Panc1 (cell line): ENCODE measurements at regions of chr11 and their contacts with region 1.

Region 1: DNA sequence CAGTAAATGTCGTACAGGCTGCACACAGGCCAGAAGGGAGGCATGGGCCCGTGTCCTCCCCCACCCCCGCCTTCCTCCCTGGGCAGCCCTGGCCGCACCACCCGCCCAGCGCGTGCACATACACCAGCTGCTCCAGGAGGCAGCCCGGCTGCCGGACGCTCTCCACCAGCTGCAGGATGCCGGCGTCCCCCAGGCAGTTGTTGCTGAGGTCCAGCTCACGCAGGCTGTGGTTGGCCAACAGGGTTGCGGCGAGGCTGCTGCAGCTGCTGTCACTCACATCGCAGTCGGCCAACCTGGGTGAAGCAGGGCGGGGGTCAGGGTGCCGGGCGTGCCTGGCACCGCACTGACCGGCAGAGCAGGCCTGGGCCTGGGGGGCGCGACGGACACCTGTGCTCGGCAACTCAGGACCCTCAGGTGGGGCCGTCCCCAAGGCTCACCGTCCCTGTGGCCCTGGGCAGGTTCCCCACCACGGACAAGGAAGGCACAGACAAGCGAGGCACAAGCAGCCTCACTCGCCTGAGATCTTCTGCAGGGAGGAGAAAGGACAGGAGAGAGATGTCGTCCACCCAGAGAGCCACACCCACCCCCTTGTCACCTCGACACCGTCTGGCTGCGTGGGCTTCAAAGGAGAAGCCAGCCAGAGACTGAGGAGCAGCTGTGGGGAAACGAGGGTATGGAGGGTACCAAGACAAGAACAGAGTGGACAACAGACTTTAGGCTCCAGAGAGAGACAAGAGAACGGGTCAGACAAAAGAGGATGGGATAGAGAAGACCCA is 12.1 kb downstream of the RNH1 start:
- DNase-seq: no peak
- ATAC-seq: peak; percentile 17
- H3K4me3 ChIP-seq: no peak overlapping the region
- H3K27ac ChIP-seq: no peak overlapping the region
- H3K4me1 ChIP-seq: no peaks in the 10 kb centered on the region
- H3K27me3 ChIP-seq: no peaks in the 10 kb centered on the region
- CTCF ChIP-seq: no peak

Region 2: GRCh38 chr11:236774-237767 is 257.9 kb before region 1 on chr11 and contains the start of gene PSMD13:
- CTCF ChIA-PET with region 1: no interaction called
- POLR2A ChIA-PET with region 1: no interaction called
- in situ Hi-C with region 1: no loop called
- intact Hi-C with region 1: no loop called
- DNase-seq: no peak
- ATAC-seq: peak; percentile 96
- H3K4me3 ChIP-seq: peak within 1 kb of the TSS; percentile 87 to 98
- H3K27ac ChIP-seq: peak within 1 kb of the TSS; percentile 97
- H3K4me1 ChIP-seq: peaks cover 26% of the 10 kb centered on the region
- H3K27me3 ChIP-seq: no peaks in the 10 kb centered on the region
- CTCF ChIP-seq: no peak
- total RNA-seq, gene PSMD13: 271 TPM

Region 3: DNA sequence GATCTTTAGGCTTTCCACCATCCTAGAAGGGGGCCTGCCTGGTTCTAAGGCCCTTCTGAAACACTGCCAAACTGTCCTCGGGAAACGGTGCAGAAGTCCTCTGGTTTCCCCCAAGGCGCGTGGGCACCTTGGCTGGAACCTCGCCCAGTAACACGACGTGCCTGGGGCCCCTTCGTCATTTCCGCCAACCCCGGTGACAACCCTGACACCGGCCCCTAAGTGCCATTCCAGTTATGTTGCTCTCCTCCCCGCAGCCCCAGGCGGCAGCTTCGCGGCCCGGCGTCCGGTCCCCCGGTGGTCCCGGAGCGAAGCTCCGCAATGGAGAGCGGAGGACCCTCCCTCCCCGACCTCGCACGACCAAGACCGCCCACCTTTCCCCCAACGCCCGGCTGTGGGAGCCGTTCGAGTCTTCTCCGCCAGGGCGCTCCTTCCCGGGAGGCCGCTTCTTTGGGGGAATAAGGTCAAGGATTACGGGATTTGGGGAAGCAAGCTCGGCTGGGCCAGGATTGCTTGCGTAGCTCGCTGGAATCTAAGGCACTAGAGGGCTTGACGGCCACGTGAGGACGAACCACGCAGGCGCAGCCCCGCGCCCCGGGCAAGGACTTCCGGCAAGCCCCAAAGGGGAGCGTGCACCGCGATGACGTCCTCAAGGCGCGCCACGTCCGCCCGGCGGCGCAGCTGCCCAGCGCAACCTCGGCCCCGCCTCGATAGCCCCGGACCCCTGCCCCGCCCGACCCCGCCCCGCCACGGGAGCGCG is 11.5 kb after region 1 on chr11:
- CTCF ChIA-PET with region 1: interaction called, 4 read pairs
- POLR2A ChIA-PET with region 1: interaction called, 11 read pairs
- in situ Hi-C with region 1: no loop called
- intact Hi-C with region 1: no loop called
- DNase-seq: peak; percentile 91
- ATAC-seq: peak; percentile 88
- H3K4me3 ChIP-seq: peak overlapping the region; percentile 83 to 94
- H3K27ac ChIP-seq: peak overlapping the region; percentile 99
- H3K4me1 ChIP-seq: peaks cover 24% of the 10 kb centered on the region
- H3K27me3 ChIP-seq: no peaks in the 10 kb centered on the region
- CTCF ChIP-seq: no peak

Region 4: DNA sequence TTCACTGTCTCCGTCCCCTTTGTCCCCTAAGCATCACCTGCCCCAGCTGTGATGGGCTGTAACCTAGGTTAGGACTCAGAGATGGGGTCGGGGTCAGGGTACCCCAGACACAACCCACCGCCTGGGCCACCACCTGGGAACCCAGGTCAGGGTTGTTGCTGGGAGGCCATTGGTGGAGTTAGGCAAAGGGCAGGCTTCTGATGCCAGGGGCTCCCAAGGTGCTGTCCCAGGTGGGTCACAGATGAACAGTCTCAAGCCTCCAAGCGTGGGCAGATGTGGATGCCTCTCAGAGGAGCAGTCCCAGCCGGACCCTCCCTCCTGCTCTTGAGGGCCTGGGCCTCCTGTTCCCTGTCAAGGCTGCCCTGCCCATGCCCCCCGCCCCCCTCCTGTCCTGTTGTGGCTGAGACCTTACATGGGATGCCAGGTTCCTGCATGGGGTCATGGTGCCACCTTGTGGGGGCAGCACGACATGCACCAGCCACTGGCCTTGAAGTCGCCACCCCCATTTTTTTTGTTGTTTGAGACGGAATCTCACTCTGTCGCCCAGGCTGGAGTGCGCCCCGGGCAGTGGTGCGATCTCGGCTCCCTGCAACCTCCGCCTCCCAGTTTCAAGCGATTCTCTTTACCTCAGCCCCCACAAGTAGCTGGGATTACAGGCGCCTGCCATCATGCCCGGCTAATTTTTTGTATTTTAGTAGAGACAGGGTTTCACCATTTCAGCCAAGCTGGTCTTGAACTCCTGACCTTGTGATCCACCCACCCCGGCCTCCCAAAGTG is 270.3 kb after region 1 on chr11:
- CTCF ChIA-PET with region 1: interaction called, 14 read pairs
- POLR2A ChIA-PET with region 1: no interaction called
- in situ Hi-C with region 1: no loop called
- intact Hi-C with region 1: no loop called
- DNase-seq: no peak
- ATAC-seq: peak; percentile 63
- H3K4me3 ChIP-seq: no peak overlapping the region
- H3K27ac ChIP-seq: no peak overlapping the region; the same call in 1 of the 2 replicates
- H3K4me1 ChIP-seq: peaks cover 25% of the 10 kb centered on the region
- H3K27me3 ChIP-seq: no peaks in the 10 kb centered on the region
- CTCF ChIP-seq: peak; percentile 98; the same call in 1 of the 2 replicates